Endothelial cell of umbilical vein (primary cell): ENCODE measurements at regions of chr2 and their contacts with region 1.

Region 1: GRCh38 chr2:230614913-230615332 is 97.7 kb upstream of the CAB39 start:
- DNase-seq: no peak
- H3K4me3 ChIP-seq: no peak overlapping the region
- H3K27ac ChIP-seq: no peak overlapping the region
- H3K4me1 ChIP-seq: peaks cover 2% of the 10 kb centered on the region
- H3K27me3 ChIP-seq: peaks cover 0 to 3% of the 10 kb centered on the region in 2 experiments
- CTCF ChIP-seq: no peak
- POLR2A ChIP-seq: no peak

Region 2: DNA sequence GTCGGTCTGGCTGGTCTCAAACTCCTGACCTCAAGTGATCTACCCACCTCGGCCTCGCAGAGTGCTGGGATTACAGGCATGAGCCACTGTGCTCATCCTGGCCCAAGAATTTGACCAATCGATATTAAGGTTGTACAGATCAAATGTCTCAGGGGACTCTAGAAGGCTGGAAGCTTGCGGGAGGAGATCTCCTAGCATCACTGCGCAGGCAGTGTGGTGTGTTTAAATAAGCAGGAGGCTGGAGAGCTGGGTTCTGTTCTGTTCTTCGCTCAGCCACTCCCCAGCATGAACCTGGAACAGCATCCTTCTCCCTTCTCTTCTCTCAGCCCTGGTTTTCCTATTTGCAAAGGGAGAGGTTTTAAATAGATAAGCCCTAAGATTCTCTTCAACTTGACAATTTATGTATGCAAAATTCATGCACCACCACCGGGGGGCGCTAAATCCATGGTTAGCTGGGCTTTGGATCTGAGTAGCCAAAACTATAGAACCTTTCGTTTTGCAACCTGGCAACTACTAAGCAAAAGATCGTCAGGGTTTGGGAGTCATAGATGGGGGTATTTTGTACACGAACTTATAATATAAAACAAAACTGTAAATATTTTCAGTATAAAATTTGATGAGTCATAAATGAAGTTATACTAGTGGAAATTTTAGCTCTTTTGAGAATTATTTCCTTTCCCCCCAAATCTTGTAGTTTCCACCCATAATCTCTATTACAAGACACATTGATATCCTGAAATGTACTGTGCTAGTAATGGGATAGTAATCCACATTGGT is 606.8 kb before region 1 on chr2:
- CTCF ChIA-PET with region 1: interaction called, 12 read pairs
- POLR2A ChIA-PET with region 1: no interaction called
- dilution Hi-C with region 1: no loop called
- intact Hi-C with region 1: loop called (anchors 1 kb)
- DNase-seq: peak; percentile 78
- H3K4me3 ChIP-seq: peak overlapping the region in 1 of 3 experiments; percentile 20
- H3K27ac ChIP-seq: no peak overlapping the region
- H3K4me1 ChIP-seq: peaks cover 7% of the 10 kb centered on the region
- H3K27me3 ChIP-seq: no peaks in the 10 kb centered on the region
- CTCF ChIP-seq: peak; percentile 67 to 78
- POLR2A ChIP-seq: no peak

Region 3: DNA sequence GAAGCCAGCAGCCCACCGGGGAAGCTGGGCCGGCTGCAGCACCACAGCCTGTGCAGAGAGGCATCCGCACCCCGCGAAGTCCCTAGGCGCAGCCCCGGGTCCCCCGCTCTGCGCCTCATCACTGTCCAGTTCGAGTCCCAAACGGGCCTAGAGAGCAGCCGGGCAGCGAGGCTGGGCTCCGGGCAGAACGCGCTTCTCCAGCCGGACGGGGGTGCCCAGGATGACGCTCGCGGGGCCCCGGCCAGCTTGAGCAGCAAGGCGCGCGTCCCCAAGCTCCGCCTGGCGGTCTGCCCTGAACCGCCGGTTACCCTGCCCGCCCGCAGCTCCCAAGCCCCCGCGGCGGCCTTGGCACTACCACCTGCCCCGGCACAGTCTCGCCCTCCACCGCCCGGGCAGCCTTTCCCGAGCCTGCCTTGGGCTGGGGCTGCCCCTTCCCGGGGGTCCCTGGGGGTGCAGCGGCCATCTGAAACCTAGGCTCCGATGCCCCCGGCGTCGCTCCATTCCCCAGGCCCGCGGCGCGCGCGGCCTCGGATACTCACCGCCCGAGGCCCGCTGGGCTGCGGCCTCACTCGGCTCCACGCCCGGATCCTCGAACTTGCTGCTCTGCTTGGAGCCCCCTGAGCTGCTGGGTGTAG is 546.8 kb before region 1 on chr2:
- CTCF ChIA-PET with region 1: interaction called, 21 read pairs
- POLR2A ChIA-PET with region 1: no interaction called
- dilution Hi-C with region 1: no loop called
- intact Hi-C with region 1: loop called (anchors 1 kb)
- DNase-seq: peak; percentile 50
- H3K4me3 ChIP-seq: peak overlapping the region; percentile 39 to 45 (median 44)
- H3K27ac ChIP-seq: no peak overlapping the region
- H3K4me1 ChIP-seq: peaks cover 7% of the 10 kb centered on the region
- H3K27me3 ChIP-seq: peaks cover 1 to 7% of the 10 kb centered on the region in 2 experiments
- CTCF ChIP-seq: peak in 1 of 2 donors; percentile 38
- POLR2A ChIP-seq: no peak

Region 4: GRCh38 chr2:230170532-230170931 is 444.4 kb before region 1 on chr2:
- CTCF ChIA-PET with region 1: no interaction called
- POLR2A ChIA-PET with region 1: no interaction called
- dilution Hi-C with region 1: no loop called
- intact Hi-C with region 1: loop called (anchors 1 kb)
- DNase-seq: peak; percentile 56
- H3K4me3 ChIP-seq: no peak overlapping the region
- H3K27ac ChIP-seq: no peak overlapping the region
- H3K4me1 ChIP-seq: peaks cover 10% of the 10 kb centered on the region
- H3K27me3 ChIP-seq: peaks cover 0 to 2% of the 10 kb centered on the region in 2 experiments
- CTCF ChIP-seq: no peak
- POLR2A ChIP-seq: no peak

Region 5: DNA sequence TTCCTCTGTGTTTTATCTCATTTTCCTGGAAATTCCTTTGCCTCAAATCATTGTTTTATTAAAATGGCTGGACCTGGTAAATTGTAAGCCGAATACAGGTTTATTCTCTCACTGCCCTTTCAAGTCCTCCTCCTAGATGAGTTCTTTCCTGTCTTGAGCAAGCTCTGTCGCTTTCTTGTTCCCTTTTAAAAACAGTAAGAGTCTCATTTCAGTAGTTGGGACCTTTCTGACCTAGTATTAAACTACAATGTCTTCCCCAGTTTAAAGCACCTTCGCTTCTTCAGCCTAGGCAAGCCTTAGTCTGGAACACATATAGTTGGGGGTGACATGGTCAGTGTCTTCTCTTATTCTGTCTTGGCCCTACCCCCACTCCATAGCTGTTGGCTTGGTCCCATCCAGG is 328.9 kb before region 1 on chr2:
- CTCF ChIA-PET with region 1: no interaction called
- POLR2A ChIA-PET with region 1: no interaction called
- dilution Hi-C with region 1: no loop called
- intact Hi-C with region 1: loop called (anchors 1 kb)
- DNase-seq: no peak
- H3K4me3 ChIP-seq: no peak overlapping the region
- H3K27ac ChIP-seq: no peak overlapping the region
- H3K4me1 ChIP-seq: no peaks in the 10 kb centered on the region
- H3K27me3 ChIP-seq: peaks cover 0 to 2% of the 10 kb centered on the region in 2 experiments
- CTCF ChIP-seq: no peak
- POLR2A ChIP-seq: no peak

Region 6: DNA sequence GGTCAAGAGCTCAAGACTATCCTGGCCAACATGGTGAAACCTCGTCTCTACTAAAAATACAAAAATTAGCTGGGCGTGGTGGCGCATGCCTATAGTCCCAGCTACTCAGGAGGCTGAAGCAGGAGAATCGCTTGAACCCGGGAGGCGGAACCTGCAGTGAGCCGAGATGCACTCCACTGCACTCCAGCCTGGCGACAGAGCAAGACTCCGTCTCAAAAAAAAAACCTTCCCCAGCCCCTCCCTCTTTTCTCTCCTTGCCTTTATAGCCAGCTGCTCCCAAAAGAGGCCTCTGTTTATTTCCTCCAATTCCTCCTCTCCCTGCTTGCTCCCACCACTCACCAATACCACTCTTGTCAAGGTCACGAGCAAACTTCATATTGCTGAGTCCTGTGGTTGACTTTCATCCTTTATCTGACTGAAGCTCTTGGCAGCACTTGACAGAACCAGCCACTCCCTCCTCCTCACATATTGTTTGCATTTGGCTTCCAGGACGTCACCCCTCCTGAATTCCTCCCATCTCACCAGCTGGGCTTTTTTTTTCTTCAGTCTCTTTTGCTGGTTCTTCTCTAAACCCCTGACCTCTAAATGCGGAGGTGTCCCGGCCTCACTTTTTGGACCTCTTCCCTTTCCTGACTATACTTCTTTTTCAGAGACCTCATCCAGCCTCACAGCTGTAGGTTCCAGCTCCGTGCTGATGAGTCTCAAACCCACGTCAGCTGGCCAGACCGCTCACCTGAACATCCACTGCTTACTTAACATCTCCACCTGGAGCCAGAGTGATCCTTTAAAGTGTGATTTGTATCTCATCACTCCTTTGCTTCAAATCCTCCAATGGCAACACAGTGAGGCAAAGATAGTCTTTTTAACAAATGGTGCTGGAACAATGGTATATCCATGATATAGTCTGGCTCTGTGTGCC is 13.1 kb after region 1 on chr2:
- CTCF ChIA-PET with region 1: no interaction called
- POLR2A ChIA-PET with region 1: no interaction called
- dilution Hi-C with region 1: no loop called
- intact Hi-C with region 1: no loop called
- DNase-seq: no peak
- H3K4me3 ChIP-seq: no peak overlapping the region
- H3K27ac ChIP-seq: no peak overlapping the region
- H3K4me1 ChIP-seq: no peaks in the 10 kb centered on the region
- H3K27me3 ChIP-seq: peaks cover 0 to 6% of the 10 kb centered on the region in 2 experiments
- CTCF ChIP-seq: no peak
- POLR2A ChIP-seq: no peak

Region 7: GRCh38 chr2:230798769-230799399 is 184.0 kb after region 1 on chr2:
- CTCF ChIA-PET with region 1: interaction called, 8 read pairs
- POLR2A ChIA-PET with region 1: no interaction called
- dilution Hi-C with region 1: no loop called
- intact Hi-C with region 1: loop called (anchors 1 kb)
- DNase-seq: peak; percentile 74
- H3K4me3 ChIP-seq: no peak overlapping the region
- H3K27ac ChIP-seq: no peak overlapping the region
- H3K4me1 ChIP-seq: peaks cover 23% of the 10 kb centered on the region
- H3K27me3 ChIP-seq: no peaks in the 10 kb centered on the region
- CTCF ChIP-seq: peak; percentile 35 to 54
- POLR2A ChIP-seq: no peak

Region 8: DNA sequence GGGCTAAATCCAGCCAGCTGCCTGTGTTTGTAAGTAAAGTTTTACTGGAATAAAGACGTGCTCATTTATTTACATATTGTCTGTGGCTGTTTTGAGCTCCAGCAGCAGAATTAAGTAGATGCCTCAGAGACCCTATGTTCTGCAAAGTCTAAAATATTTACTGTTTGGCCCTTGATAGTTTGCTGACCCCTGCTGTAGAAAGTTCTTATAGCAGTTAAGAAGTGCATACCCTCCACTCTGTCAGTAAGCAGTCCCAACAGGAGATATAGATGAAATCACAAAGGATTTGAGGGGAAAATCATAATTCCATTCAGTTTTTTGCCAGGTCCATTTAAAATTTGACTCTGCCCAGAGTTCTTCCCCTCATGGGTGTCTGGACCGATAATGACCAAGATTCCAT is 199.7 kb after region 1 on chr2:
- CTCF ChIA-PET with region 1: interaction called, 3 read pairs
- POLR2A ChIA-PET with region 1: no interaction called
- dilution Hi-C with region 1: no loop called
- intact Hi-C with region 1: loop called (anchors 5 kb)
- DNase-seq: peak; percentile 35
- H3K4me3 ChIP-seq: no peak overlapping the region
- H3K27ac ChIP-seq: no peak overlapping the region
- H3K4me1 ChIP-seq: no peaks in the 10 kb centered on the region
- H3K27me3 ChIP-seq: no peaks in the 10 kb centered on the region
- CTCF ChIP-seq: peak; percentile 14 to 16
- POLR2A ChIP-seq: no peak